Posterior cingulate gyrus (tissue), 11 donors: ENCODE measurements at regions of chr9 and their contacts with region 1.

Region 1: DNA sequence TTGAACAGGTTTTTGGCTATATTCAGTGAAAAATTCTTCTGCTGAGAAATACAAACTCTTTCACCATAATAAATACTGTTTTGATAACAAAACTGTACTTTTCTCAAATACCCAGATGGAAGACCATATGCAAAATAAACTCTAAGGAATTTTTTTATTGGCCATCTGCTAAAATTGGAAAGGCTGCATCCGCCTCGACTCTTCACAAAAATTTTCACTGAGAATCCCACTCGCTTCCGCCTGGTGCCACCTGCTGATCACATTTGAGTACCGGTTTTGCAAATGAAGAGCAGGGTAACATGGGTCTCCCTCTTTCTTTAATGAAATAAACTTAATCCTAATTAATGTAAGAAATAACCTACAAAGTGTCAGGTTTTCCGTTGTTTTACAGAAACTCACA is 76.4 kb downstream of the TTLL11 start:
- DNase-seq: peak in 7 of 10 donors; percentile 38 to 91 (median 52)

Region 2: DNA sequence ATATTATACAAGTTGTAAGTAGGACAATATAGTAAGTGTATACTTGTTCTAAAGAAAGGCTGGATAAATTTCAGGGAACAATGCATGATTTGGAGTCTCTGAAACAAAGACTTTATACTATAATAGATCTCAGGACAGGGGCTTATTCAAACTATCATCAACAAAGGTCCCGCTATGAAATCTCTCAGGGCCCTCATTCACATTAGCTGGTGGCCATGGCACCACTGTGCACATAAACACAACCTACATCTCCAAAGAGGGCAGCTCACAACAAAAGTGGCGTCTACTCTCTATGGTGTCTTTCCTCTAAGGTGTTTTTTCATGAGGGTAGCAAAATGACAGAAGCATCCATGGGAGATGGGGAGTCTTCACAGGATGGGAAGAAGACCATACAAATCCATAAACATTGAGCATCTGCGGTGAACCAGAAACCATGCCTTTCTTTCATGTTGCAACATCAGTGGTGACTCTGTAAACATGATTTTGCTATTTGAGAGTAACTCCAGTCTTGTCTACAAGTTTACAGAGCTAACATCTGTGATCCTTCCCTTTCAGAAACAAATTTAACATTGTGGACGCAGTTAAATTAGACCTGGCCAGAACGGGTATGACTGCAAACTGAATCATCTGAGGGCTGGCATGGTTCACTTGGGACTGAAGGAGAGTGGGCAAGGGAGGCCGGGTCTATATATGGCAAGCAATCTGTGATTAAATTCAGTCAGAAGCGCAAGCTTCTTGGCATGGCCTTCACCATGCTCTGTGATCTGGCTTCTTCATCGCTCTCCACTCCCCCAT is 70.9 kb after region 1 on chr9:
- intact Hi-C with region 1: loop called (anchors 10 kb)
- DNase-seq: peak in 1 of 10 donors; percentile 70